GM10248 (cell line): ENCODE measurements at regions of chrX and their contacts with region 1.

Region 1: GRCh38 chrX:41781502-41781901 is 57.5 kb downstream of the GPR82 start:
- DNase-seq: peak; percentile 58
- CTCF ChIP-seq: peak; percentile 43

Region 2: DNA sequence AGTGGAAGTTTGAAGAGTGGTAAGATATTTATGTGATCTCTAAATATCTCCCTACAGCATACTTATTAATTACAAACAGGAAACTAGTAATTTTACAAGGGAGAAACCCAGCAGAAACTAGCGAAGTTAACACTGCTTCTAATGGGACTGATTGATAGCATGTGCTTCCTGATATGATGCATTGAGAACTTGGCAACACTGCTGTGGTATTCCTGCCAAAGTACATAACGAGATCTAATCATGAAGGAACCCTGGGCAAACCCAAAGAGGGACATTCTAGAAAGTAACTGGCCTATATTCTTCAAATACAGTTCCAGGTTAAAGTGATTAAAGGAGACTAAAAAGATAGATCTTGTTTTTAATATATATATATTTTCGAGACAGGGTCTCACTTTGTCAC is 97.4 kb before region 1 on chrX:
- CTCF ChIA-PET with region 1: no interaction called
- POLR2A ChIA-PET with region 1: no interaction called
- DNase-seq: no peak
- CTCF ChIP-seq: no peak

Region 3: DNA sequence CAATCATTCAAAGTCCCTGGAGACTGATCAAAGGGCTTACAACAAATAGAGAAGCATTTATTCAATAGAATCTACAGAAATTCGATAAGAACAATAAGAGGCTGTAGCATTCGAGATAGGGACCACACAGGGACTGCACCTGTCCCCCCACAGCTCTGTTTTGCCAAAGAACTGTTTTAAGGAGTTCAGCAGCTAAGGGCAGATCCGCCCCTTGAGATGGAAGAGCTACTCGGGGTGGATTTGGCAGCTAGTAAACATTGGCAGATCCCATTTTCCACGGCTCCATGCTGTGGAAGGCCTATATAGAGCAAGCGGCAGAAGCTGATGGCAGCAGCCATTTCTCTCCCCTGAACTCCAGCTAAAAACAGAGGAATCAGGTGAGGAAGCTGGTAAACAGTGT is 18.2 kb after region 1 on chrX:
- CTCF ChIA-PET with region 1: interaction called, 10 read pairs
- POLR2A ChIA-PET with region 1: no interaction called
- DNase-seq: no peak
- CTCF ChIP-seq: no peak

Region 4: GRCh38 chrX:42992199-42992943 is 1210.9 kb after region 1 on chrX:
- CTCF ChIA-PET with region 1: no interaction called
- POLR2A ChIA-PET with region 1: no interaction called
- DNase-seq: no peak
- CTCF ChIP-seq: no peak